ENCODE measurements at regions of chr3 and their contacts with region 1.

Region 1: DNA sequence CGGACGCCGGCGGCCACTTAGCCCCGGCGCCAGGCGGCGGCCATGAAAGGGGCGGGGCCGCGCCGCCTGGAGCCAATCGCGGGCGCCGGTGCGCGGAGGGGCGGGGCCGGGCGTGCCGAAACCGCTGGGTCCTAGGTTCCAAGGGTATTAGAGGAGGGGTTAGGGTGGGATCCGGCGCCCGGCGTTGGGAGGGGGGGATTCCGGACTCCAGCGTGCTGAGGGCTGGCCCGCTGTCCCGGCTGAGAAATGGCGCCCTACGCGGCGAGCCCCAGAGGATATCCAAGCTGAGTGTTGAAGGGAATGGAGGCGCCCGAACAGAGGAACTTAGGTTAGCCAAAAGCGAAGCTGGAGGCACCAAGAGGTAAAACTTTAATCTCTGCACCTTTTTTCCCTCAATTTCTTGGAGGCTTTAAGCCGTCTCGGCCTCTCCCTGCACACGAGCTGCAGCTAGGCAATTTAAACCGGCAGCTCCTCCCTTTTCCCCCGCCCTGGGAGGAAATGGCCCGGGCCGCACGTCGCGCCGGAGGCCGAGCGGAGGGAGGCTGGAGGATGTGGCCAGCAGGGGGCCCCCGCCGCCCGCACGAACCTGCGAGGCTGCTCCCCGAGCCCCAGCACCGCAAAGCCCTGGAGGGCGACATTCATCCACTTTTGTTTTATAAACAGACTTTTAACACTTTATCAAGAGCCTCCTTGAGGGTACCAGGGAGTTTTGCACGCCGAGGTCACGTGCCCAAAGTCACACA is at the start of gene XXYLT1:
- DNase-seq: peak; percentile 70 to 81
- ATAC-seq: peak; percentile 93 to 96
- H3K4me3 ChIP-seq: peak within 1 kb of the TSS; percentile 73 to 96 (median 85)
- H3K27ac ChIP-seq: peak within 1 kb of the TSS; percentile 78 to 95 (median 87)
- H3K4me1 ChIP-seq: peaks cover 15 to 19% of the 10 kb centered on the region in 2 donors
- H3K27me3 ChIP-seq: no peaks in the 10 kb centered on the region
- CTCF ChIP-seq: peak; percentile 84 to 94 (median 90)
- POLR2A ChIP-seq: no peak
- total RNA-seq, gene XXYLT1: 0.87 to 3.1 (median 1.3) TPM

Region 2: GRCh38 chr3:195001961-195002861 is 269.1 kb before region 1 on chr3:
- in situ Hi-C with region 1: loop called in 1 of 4 experiments (anchors 25 kb)
- intact Hi-C with region 1: no loop called
- DNase-seq: peak in 1 of 2 donors; percentile 24
- ATAC-seq: peak; percentile 33 to 42
- H3K4me3 ChIP-seq: no peak overlapping the region
- H3K27ac ChIP-seq: peak overlapping the region; percentile 25 to 52 (median 39)
- H3K4me1 ChIP-seq: peaks cover 22% of the 10 kb centered on the region in 2 donors
- H3K27me3 ChIP-seq: no peaks in the 10 kb centered on the region
- CTCF ChIP-seq: peak; percentile 41 to 67 (median 51)
- POLR2A ChIP-seq: no peak

Region 3: GRCh38 chr3:195352895-195353488 is 81.7 kb after region 1 on chr3:
- in situ Hi-C with region 1: no loop called
- intact Hi-C with region 1: no loop called
- DNase-seq: no peak
- ATAC-seq: peak in 1 of 2 donors; percentile 41
- H3K4me3 ChIP-seq: no peak overlapping the region
- H3K27ac ChIP-seq: no peak overlapping the region
- H3K4me1 ChIP-seq: peaks cover 22 to 28% of the 10 kb centered on the region in 2 donors
- H3K27me3 ChIP-seq: no peaks in the 10 kb centered on the region
- CTCF ChIP-seq: no peak
- POLR2A ChIP-seq: no peak

Region 4: DNA sequence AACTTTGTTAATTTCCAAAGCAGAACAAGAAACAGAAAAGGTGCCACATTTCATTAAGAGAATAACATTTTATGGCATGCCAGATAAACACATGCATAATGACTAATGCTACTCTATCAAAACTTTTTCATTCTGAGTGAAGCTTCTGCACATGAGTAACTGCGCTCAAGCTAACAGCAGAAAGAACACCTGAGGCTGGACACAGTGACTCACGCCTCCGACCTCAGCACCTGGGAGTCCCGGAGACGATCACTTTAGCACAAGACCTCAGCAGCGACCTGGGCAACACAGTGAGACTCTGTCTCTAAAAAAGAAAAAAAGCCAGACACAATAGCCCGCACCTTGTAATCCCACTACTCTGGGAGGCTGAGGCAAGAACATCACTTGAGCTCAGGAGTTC is 100.9 kb after region 1 on chr3:
- in situ Hi-C with region 1: no loop called
- intact Hi-C with region 1: no loop called
- DNase-seq: no peak
- ATAC-seq: no peak
- H3K4me3 ChIP-seq: no peak overlapping the region
- H3K27ac ChIP-seq: no peak overlapping the region
- H3K4me1 ChIP-seq: no peaks in the 10 kb centered on the region
- H3K27me3 ChIP-seq: no peaks in the 10 kb centered on the region
- CTCF ChIP-seq: no peak
- POLR2A ChIP-seq: no peak

Region 5: GRCh38 chr3:196047391-196048030 is 776.2 kb after region 1 on chr3:
- in situ Hi-C with region 1: no loop called
- intact Hi-C with region 1: no loop called
- DNase-seq: no peak
- ATAC-seq: no peak
- H3K4me3 ChIP-seq: no peak overlapping the region
- H3K27ac ChIP-seq: no peak overlapping the region
- H3K4me1 ChIP-seq: no peaks in the 10 kb centered on the region
- H3K27me3 ChIP-seq: no peaks in the 10 kb centered on the region
- CTCF ChIP-seq: no peak
- POLR2A ChIP-seq: no peak